ENCODE measurements at regions of chr11 and their contacts with region 1.

Region 1: GRCh38 chr11:19951558-19952115 is 208.6 kb downstream of the DBX1 start:
- DNase-seq: no peak
- ATAC-seq: peak; percentile 76
- H3K4me3 ChIP-seq: no peak overlapping the region
- H3K27ac ChIP-seq: no peak overlapping the region
- H3K4me1 ChIP-seq: peaks cover 19% of the 10 kb centered on the region
- H3K27me3 ChIP-seq: no peaks in the 10 kb centered on the region
- CTCF ChIP-seq: peak; percentile 65

Region 2: GRCh38 chr11:20000351-20001134 is 48.9 kb after region 1 on chr11:
- intact Hi-C with region 1: no loop called
- DNase-seq: no peak
- ATAC-seq: peak; percentile 86
- H3K4me3 ChIP-seq: no peak overlapping the region
- H3K27ac ChIP-seq: no peak overlapping the region
- H3K4me1 ChIP-seq: peaks cover 6% of the 10 kb centered on the region
- H3K27me3 ChIP-seq: no peaks in the 10 kb centered on the region
- CTCF ChIP-seq: no peak

Region 3: DNA sequence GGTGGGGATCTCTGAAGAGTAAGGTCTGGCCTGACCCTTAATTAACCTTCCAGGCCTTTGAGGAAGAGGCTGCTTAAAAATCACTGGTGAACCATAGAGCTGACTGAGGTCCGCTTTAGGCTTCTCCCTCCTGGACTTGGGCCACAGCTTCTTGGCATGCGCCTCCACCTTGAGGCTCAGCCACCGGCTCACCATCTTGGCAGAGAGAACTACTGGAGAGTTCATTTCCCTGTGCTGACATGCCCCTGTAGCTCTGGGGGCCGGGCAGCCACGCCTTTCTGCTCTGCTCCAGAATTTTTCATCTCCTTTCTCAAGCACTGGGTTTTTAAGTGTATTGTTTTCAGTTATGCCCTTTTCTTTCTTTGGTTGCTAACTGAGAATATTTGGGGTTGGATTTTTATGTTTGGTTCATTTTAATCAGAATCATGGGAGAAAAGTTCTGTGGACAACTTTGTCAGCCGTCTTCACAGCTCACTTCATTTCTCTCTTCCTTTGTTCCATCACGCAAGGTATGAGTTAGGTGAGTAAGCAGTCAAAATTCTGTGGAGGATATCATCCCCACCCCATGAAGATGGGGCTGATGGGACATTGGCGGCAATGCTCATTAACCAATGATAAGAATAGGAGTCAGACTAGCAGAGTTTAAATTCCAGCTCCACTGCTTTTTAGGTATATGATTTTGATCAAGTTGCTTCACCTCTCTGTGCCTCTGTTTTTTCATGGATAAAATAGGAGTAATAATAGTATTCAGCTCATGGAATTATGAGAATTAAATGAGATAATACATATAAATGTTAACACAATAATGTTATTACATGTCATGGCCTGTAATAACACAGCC is 104.7 kb after region 1 on chr11:
- intact Hi-C with region 1: no loop called
- DNase-seq: no peak
- ATAC-seq: peak; percentile 25
- H3K4me3 ChIP-seq: no peak overlapping the region
- H3K27ac ChIP-seq: no peak overlapping the region
- H3K4me1 ChIP-seq: no peaks in the 10 kb centered on the region
- H3K27me3 ChIP-seq: no peaks in the 10 kb centered on the region
- CTCF ChIP-seq: no peak

Region 4: GRCh38 chr11:20102397-20102796 is 150.8 kb after region 1 on chr11:
- intact Hi-C with region 1: loop called (anchors 10 kb)
- DNase-seq: no peak
- ATAC-seq: no peak
- H3K4me3 ChIP-seq: no peak overlapping the region
- H3K27ac ChIP-seq: no peak overlapping the region
- H3K4me1 ChIP-seq: no peaks in the 10 kb centered on the region
- H3K27me3 ChIP-seq: no peaks in the 10 kb centered on the region
- CTCF ChIP-seq: no peak

Region 5: DNA sequence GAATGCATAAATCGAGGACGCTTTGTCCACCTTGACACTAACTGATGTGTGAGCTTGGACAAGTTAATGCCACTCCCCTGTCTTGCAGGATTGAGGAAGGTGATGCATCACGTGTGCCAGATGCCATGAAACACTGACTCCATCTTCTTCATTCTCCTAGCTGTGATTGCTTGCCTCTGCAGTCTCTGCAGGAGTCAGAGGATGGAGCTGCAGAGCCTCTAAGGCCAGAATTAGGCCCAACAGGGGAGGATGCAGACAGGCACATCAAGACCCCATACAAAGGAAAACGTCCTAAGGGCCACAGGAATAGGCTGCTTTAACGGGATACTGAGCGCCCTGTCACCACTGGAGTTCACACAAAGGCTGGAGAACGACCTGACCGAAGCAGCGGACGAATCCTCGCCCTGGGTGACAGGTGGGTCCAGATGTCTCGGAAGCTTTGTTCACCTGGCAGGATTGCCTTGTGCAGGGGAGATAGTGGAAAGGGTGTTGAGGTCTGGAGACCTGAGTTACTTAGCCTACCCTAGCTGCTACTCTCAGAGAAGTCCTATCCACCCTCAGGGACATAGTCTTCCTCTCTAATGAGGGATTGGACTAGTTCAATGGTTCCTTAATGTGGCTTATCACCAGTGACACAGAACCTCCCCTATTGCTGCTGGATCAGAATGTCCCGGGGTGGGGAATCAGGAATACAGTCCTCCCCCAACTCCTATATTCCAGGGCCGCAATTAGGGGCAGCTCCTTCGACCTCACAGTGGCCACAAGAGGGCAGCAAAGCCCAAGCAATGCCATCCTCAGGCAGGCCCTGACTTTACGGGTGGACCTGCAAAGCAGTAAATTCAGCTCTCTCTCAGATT is 176.3 kb after region 1 on chr11:
- intact Hi-C with region 1: loop called (anchors 10 kb)
- DNase-seq: peak; percentile 83
- ATAC-seq: peak; percentile 86
- H3K4me3 ChIP-seq: no peak overlapping the region
- H3K27ac ChIP-seq: no peak overlapping the region
- H3K4me1 ChIP-seq: peaks cover 6% of the 10 kb centered on the region
- H3K27me3 ChIP-seq: peaks cover 6% of the 10 kb centered on the region
- CTCF ChIP-seq: peak; percentile 85

Measured in upper lobe of right lung (tissue), 1 donor.